ENCODE measurements at regions of chr9 and their contacts with region 1.

Region 1: GRCh38 chr9:68643901-68644809 is 60.9 kb upstream of the PIP5K1B start:
- DNase-seq: peak; percentile 83
- ATAC-seq: peak; percentile 61
- H3K4me3 ChIP-seq: peak overlapping the region in 1 of 5 experiments; percentile 42
- H3K4me3 Mint-ChIP-seq: peak overlapping the region; percentile 70
- H3K27ac ChIP-seq: peak overlapping the region; percentile 91 to 97
- H3K27ac Mint-ChIP-seq: peak overlapping the region; percentile 91
- H3K4me1 ChIP-seq: peaks cover 83 to 91% of the 10 kb centered on the region in 2 donors
- H3K4me1 Mint-ChIP-seq: peaks cover 89% of the 10 kb centered on the region
- H3K27me3 ChIP-seq: no peaks in the 10 kb centered on the region
- H3K27me3 Mint-ChIP-seq: no peaks in the 10 kb centered on the region
- CTCF ChIP-seq: no peak

Region 2: GRCh38 chr9:68530618-68531017 is 113.5 kb before region 1 on chr9:
- CTCF ChIA-PET with region 1: no interaction called
- POLR2A ChIA-PET with region 1: no interaction called
- intact Hi-C with region 1: no loop called
- DNase-seq: no peak
- ATAC-seq: no peak
- H3K4me3 ChIP-seq: no peak overlapping the region
- H3K4me3 Mint-ChIP-seq: no peak overlapping the region
- H3K27ac ChIP-seq: no peak overlapping the region
- H3K27ac Mint-ChIP-seq: no peak overlapping the region
- H3K4me1 ChIP-seq: no peaks in the 10 kb centered on the region
- H3K4me1 Mint-ChIP-seq: no peaks in the 10 kb centered on the region
- H3K27me3 ChIP-seq: peaks cover 0 to 8% (median 0%) of the 10 kb centered on the region in 4 experiments
- H3K27me3 Mint-ChIP-seq: peaks cover 9% of the 10 kb centered on the region
- CTCF ChIP-seq: no peak

Region 3: DNA sequence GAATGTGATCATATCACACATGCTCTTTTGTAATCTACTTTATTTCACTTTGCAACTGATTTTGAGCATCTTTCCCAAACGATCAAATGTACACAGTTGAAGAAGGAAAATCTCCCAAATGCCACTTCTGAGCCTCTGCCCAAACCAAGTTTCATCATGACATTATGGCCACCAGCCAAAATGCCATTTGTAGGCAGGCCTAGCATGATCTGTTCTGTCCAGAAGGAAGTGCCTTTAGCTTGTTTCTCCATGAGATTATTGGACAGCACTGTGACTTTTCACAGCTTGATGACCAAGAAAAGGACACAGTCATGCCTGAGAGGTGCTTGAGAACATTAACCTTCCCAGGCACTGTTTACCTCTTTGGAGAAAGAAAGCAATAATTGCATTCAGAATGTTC is 12.3 kb before region 1 on chr9:
- CTCF ChIA-PET with region 1: interaction called, 11 read pairs
- POLR2A ChIA-PET with region 1: no interaction called
- intact Hi-C with region 1: no loop called
- DNase-seq: no peak
- ATAC-seq: no peak
- H3K4me3 ChIP-seq: no peak overlapping the region
- H3K4me3 Mint-ChIP-seq: no peak overlapping the region
- H3K27ac ChIP-seq: no peak overlapping the region
- H3K27ac Mint-ChIP-seq: no peak overlapping the region
- H3K4me1 ChIP-seq: peaks cover 24 to 25% of the 10 kb centered on the region in 2 donors
- H3K4me1 Mint-ChIP-seq: peaks cover 27% of the 10 kb centered on the region
- H3K27me3 ChIP-seq: no peaks in the 10 kb centered on the region
- H3K27me3 Mint-ChIP-seq: no peaks in the 10 kb centered on the region
- CTCF ChIP-seq: no peak

Region 4: DNA sequence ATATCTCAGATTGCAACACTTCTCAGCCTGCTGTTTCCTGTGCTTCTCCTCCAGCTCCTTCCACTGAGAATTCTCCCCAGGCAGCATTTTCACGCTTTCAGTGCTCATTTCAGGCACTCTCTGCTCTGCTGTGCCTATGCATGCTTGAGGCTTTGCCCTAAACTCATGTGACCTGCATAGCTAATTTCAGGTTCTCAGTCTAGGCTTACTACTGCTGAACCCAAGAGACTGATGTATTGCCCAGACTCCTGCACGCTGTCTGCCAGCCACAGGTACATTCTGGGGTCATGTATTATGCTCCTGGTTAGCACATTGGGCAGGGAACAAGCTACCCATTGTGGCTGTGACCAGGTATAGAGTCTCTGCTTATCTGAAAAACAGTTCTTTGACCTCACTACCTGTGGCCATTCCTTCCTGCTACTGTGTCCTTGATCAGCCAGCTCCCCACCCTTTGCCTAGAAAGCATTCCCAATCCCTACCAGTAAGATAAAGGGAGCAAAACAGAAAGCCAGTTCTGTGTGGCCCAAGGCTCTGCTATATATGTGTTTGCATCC is 95.5 kb after region 1 on chr9:
- CTCF ChIA-PET with region 1: no interaction called
- POLR2A ChIA-PET with region 1: no interaction called
- intact Hi-C with region 1: no loop called
- DNase-seq: no peak
- ATAC-seq: no peak
- H3K4me3 ChIP-seq: no peak overlapping the region
- H3K4me3 Mint-ChIP-seq: no peak overlapping the region
- H3K27ac ChIP-seq: no peak overlapping the region
- H3K27ac Mint-ChIP-seq: no peak overlapping the region
- H3K4me1 ChIP-seq: peaks cover 0 to 6% of the 10 kb centered on the region in 2 donors
- H3K4me1 Mint-ChIP-seq: peaks cover 26% of the 10 kb centered on the region
- H3K27me3 ChIP-seq: no peaks in the 10 kb centered on the region
- H3K27me3 Mint-ChIP-seq: no peaks in the 10 kb centered on the region
- CTCF ChIP-seq: no peak

Region 5: GRCh38 chr9:68895741-68896478 is 251.8 kb after region 1 on chr9:
- CTCF ChIA-PET with region 1: no interaction called
- POLR2A ChIA-PET with region 1: no interaction called
- intact Hi-C with region 1: loop called (anchors 5 kb)
- DNase-seq: peak; percentile 37
- ATAC-seq: peak; percentile 93
- H3K4me3 ChIP-seq: peak overlapping the region in 3 of 5 experiments; percentile 3 to 55 (median 28)
- H3K4me3 Mint-ChIP-seq: peak overlapping the region; percentile 74
- H3K27ac ChIP-seq: peak overlapping the region; percentile 39 to 68
- H3K27ac Mint-ChIP-seq: peak overlapping the region; percentile 86
- H3K4me1 ChIP-seq: peaks cover 31 to 39% of the 10 kb centered on the region in 2 donors
- H3K4me1 Mint-ChIP-seq: peaks cover 60% of the 10 kb centered on the region
- H3K27me3 ChIP-seq: no peaks in the 10 kb centered on the region
- H3K27me3 Mint-ChIP-seq: no peaks in the 10 kb centered on the region
- CTCF ChIP-seq: no peak